ENCODE measurements at regions of chr3 and their contacts with region 1.

Region 1: GRCh38 chr3:196502775-196503195 is 783 bp downstream of the RNF168 start:
- DNase-seq: peak; percentile 81
- H3K4me3 Mint-ChIP-seq: peak overlapping the region; percentile 97
- H3K27ac Mint-ChIP-seq: peak overlapping the region; percentile 99
- H3K4me1 Mint-ChIP-seq: peaks cover 36% of the 10 kb centered on the region
- H3K27me3 Mint-ChIP-seq: no peaks in the 10 kb centered on the region

Region 2: GRCh38 chr3:196081791-196082618 is 420.8 kb before region 1 on chr3 and contains the start of gene TFRC:
- CTCF ChIA-PET with region 1: no interaction called
- POLR2A ChIA-PET with region 1: no interaction called
- intact Hi-C with region 1: loop called (anchors 1 kb)
- DNase-seq: peak; percentile 97
- H3K4me3 Mint-ChIP-seq: peak within 1 kb of the TSS; percentile 99
- H3K27ac Mint-ChIP-seq: peak within 1 kb of the TSS; percentile 92
- H3K4me1 Mint-ChIP-seq: peaks cover 31% of the 10 kb centered on the region
- H3K27me3 Mint-ChIP-seq: no peaks in the 10 kb centered on the region
- total RNA-seq, gene TFRC: 341 to 347 TPM

Region 3: GRCh38 chr3:196274585-196274984 is 228.2 kb before region 1 on chr3:
- CTCF ChIA-PET with region 1: no interaction called
- POLR2A ChIA-PET with region 1: no interaction called
- intact Hi-C with region 1: loop called (anchors 1 kb)
- DNase-seq: peak; percentile 81
- H3K4me3 Mint-ChIP-seq: peak overlapping the region; percentile 53
- H3K27ac Mint-ChIP-seq: peak overlapping the region; percentile 90
- H3K4me1 Mint-ChIP-seq: peaks cover 67% of the 10 kb centered on the region
- H3K27me3 Mint-ChIP-seq: no peaks in the 10 kb centered on the region

Region 4: GRCh38 chr3:196287440-196288148 is 215.2 kb before region 1 on chr3 and contains the start of gene PCYT1A:
- CTCF ChIA-PET with region 1: no interaction called
- POLR2A ChIA-PET with region 1: interaction called, 3 read pairs
- intact Hi-C with region 1: loop called (anchors 1 kb)
- DNase-seq: peak; percentile 87
- H3K4me3 Mint-ChIP-seq: peak within 1 kb of the TSS; percentile 100
- H3K27ac Mint-ChIP-seq: peak within 1 kb of the TSS; percentile 98
- H3K4me1 Mint-ChIP-seq: peaks cover 39% of the 10 kb centered on the region
- H3K27me3 Mint-ChIP-seq: no peaks in the 10 kb centered on the region
- total RNA-seq, gene PCYT1A: 46.8 to 48.6 TPM

Region 5: DNA sequence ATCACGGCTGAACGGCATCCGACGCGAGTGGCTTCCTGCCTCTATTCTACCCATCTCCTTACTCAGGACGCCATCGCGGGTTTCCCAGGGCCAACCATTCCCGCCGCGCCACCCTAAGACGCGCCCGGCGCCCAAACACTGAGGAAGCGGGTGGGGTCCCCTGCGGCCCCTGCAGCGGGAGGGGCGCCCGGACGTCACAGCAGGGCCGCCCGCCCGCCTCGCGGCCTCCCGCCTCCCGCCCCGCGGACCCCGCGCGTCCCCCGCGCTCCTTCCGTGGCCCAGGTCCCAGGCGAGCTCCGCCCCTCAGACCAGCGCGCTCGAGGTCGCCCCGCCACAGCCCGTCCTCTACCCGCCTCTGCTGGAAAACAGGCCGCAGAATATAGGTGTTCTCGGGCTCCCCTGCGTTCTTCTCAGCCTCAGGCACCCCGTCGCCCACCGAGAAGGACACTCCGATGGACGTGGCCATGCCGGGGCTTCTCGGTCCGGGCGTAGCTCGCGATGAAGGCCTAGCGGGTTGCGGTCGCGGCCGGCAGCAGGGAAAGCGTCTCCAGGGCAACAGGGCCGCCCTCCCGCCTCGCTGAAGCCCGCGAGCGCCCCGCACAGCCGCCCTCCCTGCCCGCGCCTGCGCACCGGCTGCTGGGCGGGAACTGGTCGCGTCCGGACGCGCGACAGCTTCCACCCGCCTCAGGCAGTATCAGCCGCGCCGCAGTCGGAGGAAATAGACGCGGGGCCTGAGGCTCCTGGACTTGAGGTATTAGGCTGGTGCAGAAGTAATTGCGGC is 184.9 kb before region 1 on chr3 and contains the start of gene DYNLT2B:
- CTCF ChIA-PET with region 1: no interaction called
- POLR2A ChIA-PET with region 1: interaction called, 4 read pairs
- intact Hi-C with region 1: loop called (anchors 1 kb)
- DNase-seq: peak; percentile 92
- H3K4me3 Mint-ChIP-seq: peak within 1 kb of the TSS; percentile 97
- H3K27ac Mint-ChIP-seq: peak within 1 kb of the TSS; percentile 95
- H3K4me1 Mint-ChIP-seq: peaks cover 7% of the 10 kb centered on the region
- H3K27me3 Mint-ChIP-seq: no peaks in the 10 kb centered on the region
- total RNA-seq, gene DYNLT2B: 15.8 to 17.1 TPM

Region 6: GRCh38 chr3:196432137-196432879 is 70.5 kb before region 1 on chr3 and contains the start of gene UBXN7:
- CTCF ChIA-PET with region 1: no interaction called
- POLR2A ChIA-PET with region 1: no interaction called
- intact Hi-C with region 1: loop called (anchors 1 kb)
- DNase-seq: peak; percentile 98
- H3K4me3 Mint-ChIP-seq: peak within 1 kb of the TSS; percentile 75
- H3K27ac Mint-ChIP-seq: peak within 1 kb of the TSS; percentile 90
- H3K4me1 Mint-ChIP-seq: peaks cover 13% of the 10 kb centered on the region
- H3K27me3 Mint-ChIP-seq: no peaks in the 10 kb centered on the region
- total RNA-seq, gene UBXN7: 58.1 to 61.1 TPM